ENCODE measurements at regions of chr4 and their contacts with region 1.

Region 1: DNA sequence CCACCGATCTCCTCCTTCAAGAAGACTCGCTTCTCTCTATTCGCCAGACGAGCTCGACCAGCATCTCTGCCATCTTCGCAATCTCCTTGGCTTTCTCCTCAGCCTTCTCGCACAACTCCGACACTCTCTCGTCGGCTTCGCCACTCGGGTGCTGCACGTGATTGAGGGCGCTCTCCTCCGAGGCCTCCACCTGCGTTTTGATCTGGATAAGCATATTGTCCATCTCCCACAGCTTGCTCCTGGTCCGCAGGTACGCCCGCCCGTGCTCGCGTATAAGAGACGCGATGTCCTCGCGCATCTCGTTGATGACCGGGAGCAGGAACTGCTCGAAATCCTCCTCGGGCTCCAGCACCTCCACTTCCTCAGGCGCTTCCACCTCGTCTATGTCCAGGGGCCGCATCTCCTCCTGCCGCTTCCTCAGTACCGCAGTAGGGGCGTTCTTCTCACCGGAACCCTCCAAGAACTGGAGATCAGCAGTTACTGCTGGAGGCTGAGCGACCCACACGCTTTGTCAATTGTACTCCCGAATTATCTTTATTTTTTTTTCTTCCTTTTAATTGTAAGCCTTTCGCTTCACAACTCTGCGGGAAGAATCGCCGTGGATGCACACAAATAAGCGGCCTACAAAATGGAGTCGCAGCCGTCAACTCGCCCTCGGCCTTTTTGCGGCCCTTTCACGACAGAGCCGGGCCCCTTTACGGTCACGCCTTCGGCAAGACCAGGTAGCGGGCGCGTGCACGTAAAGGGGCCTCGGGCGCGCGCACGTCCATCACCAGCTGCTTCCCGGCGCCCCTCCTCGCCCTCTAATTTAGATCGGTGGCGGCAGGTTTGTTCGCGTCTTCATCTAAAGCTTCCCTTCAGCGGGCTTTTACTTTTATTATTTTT is at the start of gene MRFAP1L1:
- DNase-seq: peak; percentile 94

Region 2: GRCh38 chr4:6688879-6689505 is 20.5 kb before region 1 on chr4:
- CTCF ChIA-PET with region 1: interaction called, 3 read pairs
- POLR2A ChIA-PET with region 1: interaction called, 11 read pairs
- DNase-seq: peak; percentile 59

Region 3: DNA sequence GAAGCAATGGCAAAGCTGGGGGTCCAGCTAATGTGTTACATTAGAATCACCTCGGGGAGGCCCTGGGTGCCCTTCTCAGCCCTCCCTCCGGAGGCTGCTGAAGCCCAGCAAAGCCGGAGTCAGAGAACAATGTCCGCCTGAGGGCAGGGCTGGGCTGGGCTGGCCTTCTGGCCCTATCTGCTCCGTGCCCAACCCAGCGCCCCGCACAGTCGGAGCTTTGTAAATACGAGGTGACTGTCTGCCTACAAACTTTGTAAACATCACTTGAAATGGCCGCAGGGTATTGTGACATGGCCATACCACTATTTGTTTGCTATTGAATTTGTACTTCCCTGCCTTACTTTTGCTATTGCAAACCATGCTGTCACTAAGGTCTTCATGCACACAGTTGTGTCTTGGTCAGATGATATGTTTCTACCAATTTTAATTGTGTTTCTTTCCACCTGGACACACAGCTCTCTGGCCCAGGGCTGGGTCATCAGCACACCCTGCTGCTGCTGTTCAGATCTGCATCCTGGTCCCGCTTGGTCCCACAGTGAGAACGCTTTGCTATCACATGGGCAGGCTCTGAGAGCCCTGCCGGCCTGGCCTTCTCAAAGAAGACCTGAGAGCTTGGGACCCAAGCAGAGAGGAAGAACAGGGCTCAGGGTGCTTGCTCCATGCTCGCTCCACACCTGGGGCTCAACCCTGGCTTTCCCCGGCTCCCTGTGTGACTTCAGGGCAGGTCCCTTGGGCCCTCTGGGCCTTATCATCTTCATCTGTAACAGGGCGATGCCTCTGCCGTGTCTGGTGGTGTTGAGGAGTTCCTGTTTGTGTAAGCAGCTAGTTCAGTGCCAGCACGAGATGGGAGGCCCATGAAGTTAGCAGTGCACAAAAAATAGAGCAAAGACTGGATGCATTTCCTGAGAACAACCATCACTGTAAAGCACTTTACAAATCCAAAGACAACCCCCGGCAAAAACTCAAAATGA is 13.5 kb before region 1 on chr4:
- CTCF ChIA-PET with region 1: interaction called, 3 read pairs
- POLR2A ChIA-PET with region 1: interaction called, 11 read pairs
- DNase-seq: no peak

Measured in HEK293T (cell line).